ENCODE measurements at regions of chr14 and their contacts with region 1.

Region 1: DNA sequence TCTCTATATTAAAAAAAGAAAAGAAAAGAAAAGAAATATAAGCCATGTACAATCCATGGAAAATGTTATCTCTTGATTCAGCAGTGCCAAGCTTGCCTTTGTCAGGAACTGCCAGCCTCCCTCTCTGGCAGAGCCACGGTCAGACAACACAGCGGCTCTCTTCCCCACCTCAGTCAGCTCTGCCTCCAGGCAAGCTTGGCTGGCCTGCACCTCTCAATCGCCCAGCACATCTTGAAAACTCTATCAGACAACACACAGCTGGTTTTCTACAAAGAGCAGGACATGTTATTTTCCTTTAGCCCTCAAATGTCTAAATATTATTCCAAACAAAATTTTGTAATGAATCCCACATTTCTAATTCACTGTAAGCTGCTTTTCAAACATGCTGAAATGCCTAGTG is 20.0 kb upstream of the GCH1 start:
- DNase-seq: no peak
- ATAC-seq: no peak
- H3K4me3 ChIP-seq: no peak overlapping the region
- H3K27ac ChIP-seq: no peak overlapping the region
- H3K4me1 ChIP-seq: no peaks in the 10 kb centered on the region
- H3K27me3 ChIP-seq: no peaks in the 10 kb centered on the region
- CTCF ChIP-seq: no peak

Region 2: DNA sequence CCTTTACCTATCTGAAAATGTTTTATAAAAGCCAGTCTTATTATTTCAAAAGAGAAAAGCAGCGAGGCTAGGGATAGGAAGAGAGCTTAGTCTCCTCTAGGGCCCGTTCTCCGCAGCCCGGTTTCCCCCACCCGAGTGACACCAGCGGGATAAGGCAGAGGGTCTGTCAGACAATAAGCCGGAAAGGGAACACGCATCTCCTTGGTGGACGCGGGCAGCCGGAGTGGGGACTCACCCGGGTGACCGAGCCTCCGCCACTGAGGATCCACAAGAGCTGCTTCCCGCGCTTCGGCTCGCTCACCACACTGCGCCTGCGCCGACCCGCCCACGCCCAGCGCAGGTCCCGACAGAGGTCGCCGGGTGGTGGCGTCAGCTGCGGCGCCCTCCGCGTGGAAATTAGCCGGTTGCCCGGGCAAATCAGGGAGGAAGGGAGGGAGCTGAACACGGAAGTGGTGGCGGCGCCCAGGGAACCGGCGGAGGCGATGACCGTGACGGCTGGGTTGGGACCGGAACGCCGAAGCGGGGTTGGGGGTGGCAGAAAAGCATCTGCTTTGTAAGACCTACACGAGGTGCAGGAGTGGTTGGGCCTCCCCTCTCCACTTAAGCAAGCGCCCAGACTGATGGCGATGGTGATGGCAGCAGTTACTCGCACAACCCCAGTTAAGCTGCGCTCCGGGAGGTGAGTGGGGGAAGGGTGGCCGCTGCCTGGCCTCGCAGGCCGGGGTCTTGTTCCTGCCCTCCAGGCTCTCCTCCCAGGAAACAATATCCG is 104.4 kb after region 1 on chr14 and contains the starts of genes SOCS4 and WDHD1:
- CTCF ChIA-PET with region 1: no interaction called
- POLR2A ChIA-PET with region 1: no interaction called
- intact Hi-C with region 1: no loop called
- DNase-seq: peak; percentile 99
- ATAC-seq: peak; percentile 92
- H3K4me3 ChIP-seq: peak within 1 kb of the TSS; percentile 75
- H3K27ac ChIP-seq: peak within 1 kb of the TSS; percentile 55
- H3K4me1 ChIP-seq: peaks cover 34% of the 10 kb centered on the region
- H3K27me3 ChIP-seq: no peaks in the 10 kb centered on the region
- CTCF ChIP-seq: peak; percentile 34
- total RNA-seq, gene SOCS4: 21.9 and 22.5 TPM in 2 replicates
- total RNA-seq, gene WDHD1: 45.9 and 47.1 TPM in 2 replicates

Region 3: GRCh38 chr14:55316567-55316966 is 394.0 kb after region 1 on chr14:
- CTCF ChIA-PET with region 1: no interaction called
- POLR2A ChIA-PET with region 1: interaction called, 10 read pairs
- intact Hi-C with region 1: no loop called
- DNase-seq: no peak
- ATAC-seq: no peak
- H3K4me3 ChIP-seq: no peak overlapping the region
- H3K27ac ChIP-seq: no peak overlapping the region
- H3K4me1 ChIP-seq: no peaks in the 10 kb centered on the region
- H3K27me3 ChIP-seq: no peaks in the 10 kb centered on the region
- CTCF ChIP-seq: no peak